Colonic mucosa (tissue), 4 donors: ENCODE measurements at regions of chr1 and their contacts with region 1.

Region 1: DNA sequence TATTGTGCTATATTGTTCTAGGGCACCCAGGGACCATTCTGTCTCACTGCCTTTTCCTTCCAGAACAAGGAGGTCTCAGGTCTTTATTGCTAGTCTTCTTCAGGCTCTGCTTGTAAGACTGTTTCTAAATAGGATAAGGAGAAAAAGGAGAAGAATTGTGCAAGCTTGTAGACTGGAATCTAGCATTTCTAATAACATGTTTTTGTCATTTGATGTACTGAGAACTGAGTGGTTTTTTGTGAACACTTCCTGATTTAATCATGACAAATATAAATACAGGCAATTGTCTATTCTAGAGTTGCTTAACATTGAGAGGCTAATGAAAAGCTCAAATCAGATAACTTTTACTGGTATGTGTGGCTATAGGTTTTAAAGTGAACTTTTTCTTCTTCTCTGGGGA is 77.6 kb downstream of the CLIC4 start:
- DNase-seq: no peak
- H3K4me3 ChIP-seq: no peak overlapping the region
- H3K27ac ChIP-seq: no peak overlapping the region
- H3K4me1 ChIP-seq: no peaks in the 10 kb centered on the region
- H3K27me3 ChIP-seq: no peaks in the 10 kb centered on the region
- CTCF ChIP-seq: no peak

Region 2: DNA sequence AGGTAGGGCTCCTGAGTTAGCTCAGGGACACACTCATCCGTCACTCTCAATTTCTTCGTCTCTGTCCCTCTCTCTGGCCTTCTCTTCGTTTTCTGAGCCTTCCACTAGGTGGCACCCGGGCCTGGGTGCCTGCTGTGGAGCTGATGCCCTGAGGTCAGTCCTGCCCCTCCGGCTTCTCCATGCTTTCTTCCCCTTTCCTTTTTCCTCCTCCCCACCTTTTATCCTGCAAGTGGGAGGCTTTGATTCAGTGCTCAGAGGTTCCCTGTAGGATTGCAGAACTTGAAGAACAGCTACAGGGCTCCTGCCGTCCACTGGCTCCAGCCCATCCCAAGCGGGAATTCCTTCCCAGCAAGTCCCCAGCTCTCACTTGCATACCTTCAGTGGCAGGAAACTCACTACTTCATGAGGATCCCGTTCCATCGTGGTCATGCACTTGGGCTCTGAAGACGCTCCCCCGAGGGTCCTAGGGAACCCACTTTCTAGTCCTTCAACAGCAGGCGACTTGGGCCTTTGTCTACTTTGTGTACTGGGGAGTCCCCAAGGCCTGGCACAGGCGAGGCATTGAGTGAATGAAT is 134.2 kb before region 1 on chr1:
- intact Hi-C with region 1: no loop called
- DNase-seq: peak; percentile 73
- H3K4me3 ChIP-seq: no peak overlapping the region
- H3K27ac ChIP-seq: no peak overlapping the region
- H3K4me1 ChIP-seq: no peaks in the 10 kb centered on the region
- H3K27me3 ChIP-seq: no peaks in the 10 kb centered on the region
- CTCF ChIP-seq: peak; percentile 62

Region 3: GRCh38 chr1:24754229-24754628 is 68.7 kb before region 1 on chr1:
- intact Hi-C with region 1: loop called (anchors 10 kb)
- DNase-seq: no peak
- H3K4me3 ChIP-seq: no peak overlapping the region
- H3K27ac ChIP-seq: no peak overlapping the region
- H3K4me1 ChIP-seq: no peaks in the 10 kb centered on the region
- H3K27me3 ChIP-seq: no peaks in the 10 kb centered on the region
- CTCF ChIP-seq: no peak